Tibial artery (tissue), 4 donors: ENCODE measurements at regions of chr20 and their contacts with region 1.

Region 1: DNA sequence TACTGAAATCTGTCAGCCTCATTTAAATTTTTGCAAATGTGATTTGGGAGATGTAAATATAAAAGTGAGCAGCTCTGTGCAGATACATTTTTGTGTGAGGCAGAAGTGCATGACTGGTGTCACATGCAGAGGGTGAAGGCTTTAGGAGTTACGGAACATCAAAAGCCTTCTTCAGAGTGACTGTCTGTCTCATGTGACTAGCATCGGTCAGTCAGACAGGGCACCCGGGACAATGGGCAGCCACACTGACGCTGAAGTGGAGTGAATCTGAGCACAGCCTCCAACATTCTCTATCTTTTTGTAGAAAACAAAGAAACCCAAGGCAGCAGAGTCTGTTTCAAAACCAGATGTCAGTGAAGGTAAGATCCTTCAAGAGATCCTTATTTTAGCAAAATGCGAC is 7.9 kb upstream of the FAM209A start:
- DNase-seq: peak in 1 of 2 donors; percentile 16
- H3K4me3 ChIP-seq: no peak overlapping the region
- H3K27ac ChIP-seq: no peak overlapping the region
- H3K4me1 ChIP-seq: peaks cover 0 to 8% (median 0%) of the 10 kb centered on the region in 4 donors
- H3K27me3 ChIP-seq: no peaks in the 10 kb centered on the region
- CTCF ChIP-seq: no peak

Region 2: DNA sequence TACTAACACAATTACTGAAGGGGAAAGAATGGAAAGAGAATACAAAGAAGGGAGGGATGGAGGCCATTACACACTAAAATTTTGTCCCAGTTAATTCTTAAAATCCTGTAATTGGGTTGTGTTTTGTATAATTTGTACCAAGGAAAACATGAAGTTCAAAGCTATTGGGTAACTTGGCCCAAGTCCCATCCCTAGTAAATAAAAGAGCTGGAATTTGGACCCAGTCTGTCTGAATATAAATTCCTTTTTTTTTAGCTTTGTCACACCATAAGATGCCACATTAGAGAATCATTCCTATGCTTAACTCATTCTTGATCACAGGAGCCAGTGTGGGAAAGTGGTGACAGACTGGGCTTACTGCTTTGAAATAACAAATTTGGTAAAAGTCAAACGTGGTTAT is 444.5 kb before region 1 on chr20:
- intact Hi-C with region 1: loop called (anchors 5 kb)
- DNase-seq: no peak
- H3K4me3 ChIP-seq: no peak overlapping the region
- H3K27ac ChIP-seq: no peak overlapping the region
- H3K4me1 ChIP-seq: no peaks in the 10 kb centered on the region
- H3K27me3 ChIP-seq: no peaks in the 10 kb centered on the region
- CTCF ChIP-seq: no peak

Region 3: GRCh38 chr20:56362833-56363413 is 153.7 kb before region 1 on chr20:
- intact Hi-C with region 1: no loop called
- DNase-seq: no peak
- H3K4me3 ChIP-seq: no peak overlapping the region
- H3K27ac ChIP-seq: no peak overlapping the region
- H3K4me1 ChIP-seq: peaks cover 0 to 38% (median 16%) of the 10 kb centered on the region in 4 donors
- H3K27me3 ChIP-seq: no peaks in the 10 kb centered on the region
- CTCF ChIP-seq: no peak